ENCODE measurements at regions of chr3 and their contacts with region 1.

Region 1: DNA sequence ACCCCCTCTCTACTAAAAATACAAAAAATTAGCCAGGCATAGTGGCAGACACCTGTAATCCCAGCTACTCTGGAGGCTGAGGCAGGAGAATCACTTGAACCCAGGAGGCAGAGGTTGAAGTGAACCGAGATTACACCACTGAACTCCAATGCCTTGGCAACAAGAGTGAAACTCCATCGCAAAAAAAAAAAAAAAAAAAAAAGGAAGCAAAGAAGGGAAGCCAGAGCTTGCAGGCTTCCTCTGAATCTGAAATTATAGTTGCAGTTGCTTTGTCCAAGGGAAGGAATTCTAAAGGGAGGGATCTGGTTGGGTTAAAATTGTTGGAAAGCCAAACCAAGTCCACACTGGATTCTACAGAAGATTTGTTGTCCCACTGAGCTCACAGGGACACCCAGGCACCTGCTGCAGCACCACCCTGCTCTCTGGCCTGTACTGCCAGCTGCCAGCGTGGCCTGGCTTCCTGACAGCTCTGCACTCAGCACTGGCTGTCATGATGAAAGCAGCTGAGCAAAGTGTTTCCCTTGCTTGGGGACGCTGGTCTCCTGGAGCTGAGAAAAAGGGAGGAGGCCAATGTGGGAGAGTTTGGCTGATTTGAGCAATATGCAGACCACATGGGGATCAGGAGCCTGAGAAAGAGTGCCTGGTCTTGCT is 88.8 kb upstream of the HES1 start:
- DNase-seq: peak; percentile 84

Region 2: DNA sequence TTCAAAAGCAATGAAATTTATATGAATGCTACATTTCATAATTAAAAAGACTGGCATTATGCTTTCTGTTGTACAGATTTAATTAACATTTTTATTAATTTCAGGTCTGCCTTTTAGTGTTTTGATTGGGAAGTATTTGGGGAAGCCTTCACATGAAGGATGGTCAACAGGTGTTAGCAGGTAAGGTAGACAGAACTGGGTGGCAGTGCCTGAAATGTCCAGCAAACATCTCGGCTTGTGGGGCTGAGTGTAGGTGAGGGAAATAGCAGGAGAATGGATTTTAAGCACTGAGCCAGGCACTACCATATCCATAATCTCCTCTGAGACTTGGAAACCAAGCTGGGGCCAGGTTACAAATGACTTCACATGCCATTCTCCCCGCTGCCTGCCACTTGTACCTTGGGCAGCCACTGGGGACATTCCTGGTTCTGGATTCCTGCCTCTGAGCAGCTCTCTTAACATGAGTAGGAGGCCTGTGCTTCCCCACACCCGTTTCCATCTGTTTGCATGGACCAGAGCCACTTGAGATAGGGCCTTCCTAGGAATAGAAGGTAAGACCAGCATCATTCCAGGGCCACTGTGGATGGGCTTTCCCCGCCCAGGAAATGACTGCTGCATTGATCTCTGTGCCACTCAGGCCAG is 37.1 kb before region 1 on chr3:
- intact Hi-C with region 1: loop called (anchors 5 kb)
- DNase-seq: no peak

Measured in cardiac septum (tissue), 1 donor.